ENCODE measurements at regions of chr13 and their contacts with region 1.

Region 1: GRCh38 chr13:110784704-110785103 is 71.2 kb downstream of the ING1 start:
- DNase-seq: no peak
- ATAC-seq: no peak
- H3K4me3 ChIP-seq: no peak overlapping the region
- H3K27ac ChIP-seq: no peak overlapping the region
- H3K4me1 ChIP-seq: no peaks in the 10 kb centered on the region
- H3K27me3 ChIP-seq: no peaks in the 10 kb centered on the region
- CTCF ChIP-seq: no peak
- POLR2A ChIP-seq: no peak

Region 2: GRCh38 chr13:110546930-110547329 is 237.8 kb before region 1 on chr13:
- intact Hi-C with region 1: no loop called
- DNase-seq: peak; percentile 85 to 94 (median 87)
- ATAC-seq: peak; percentile 76 to 92 (median 89)
- H3K4me3 ChIP-seq: no peak overlapping the region
- H3K27ac ChIP-seq: peak overlapping the region in 11 of 12 donors; percentile 29 to 82 (median 48)
- H3K4me1 ChIP-seq: peaks cover 0 to 46% (median 26%) of the 10 kb centered on the region in 12 donors
- H3K27me3 ChIP-seq: no peaks in the 10 kb centered on the region
- CTCF ChIP-seq: no peak
- POLR2A ChIP-seq: no peak

Region 3: GRCh38 chr13:110737555-110737954 is 47.1 kb before region 1 on chr13:
- intact Hi-C with region 1: loop called in 1 of 10 experiments (anchors 10 kb)
- DNase-seq: no peak
- ATAC-seq: no peak
- H3K4me3 ChIP-seq: no peak overlapping the region
- H3K27ac ChIP-seq: no peak overlapping the region
- H3K4me1 ChIP-seq: no peaks in the 10 kb centered on the region
- H3K27me3 ChIP-seq: no peaks in the 10 kb centered on the region
- CTCF ChIP-seq: no peak
- POLR2A ChIP-seq: no peak

Measured in heart left ventricle (tissue), 16 donors.